ENCODE measurements at regions of chr1 and their contacts with region 1.

Region 1: DNA sequence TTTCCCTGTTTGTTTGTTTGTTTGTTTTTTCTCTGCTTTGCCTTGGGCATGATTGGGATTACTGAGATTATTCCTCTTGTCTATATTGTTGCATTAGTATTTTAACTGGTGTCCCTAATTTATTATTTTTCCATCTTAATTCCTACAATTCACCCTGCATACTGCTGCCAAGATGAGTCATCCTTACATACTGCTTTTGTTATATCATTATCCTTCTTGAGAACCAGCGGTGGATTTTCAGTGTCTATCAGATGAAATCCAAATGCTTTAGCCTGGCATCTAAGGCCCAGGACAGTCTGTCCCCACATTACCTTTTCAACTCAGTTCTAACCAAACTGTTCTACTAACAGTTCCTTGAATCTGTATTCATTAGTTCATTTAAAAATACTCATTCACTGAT is 101.7 kb downstream of the OLFML2B start:
- DNase-seq: no peak
- ATAC-seq: no peak
- H3K4me3 ChIP-seq: no peak overlapping the region
- H3K4me3 Mint-ChIP-seq: peak overlapping the region in 2 of 10 donors; percentile 8 to 15
- H3K27ac ChIP-seq: no peak overlapping the region
- H3K27ac Mint-ChIP-seq: peak overlapping the region in 3 of 9 donors; percentile 9 to 34 (median 17)
- H3K4me1 ChIP-seq: peaks cover 15% of the 10 kb centered on the region in 2 donors
- H3K4me1 Mint-ChIP-seq: peaks cover 10 to 83% (median 60%) of the 10 kb centered on the region in 7 donors
- H3K27me3 ChIP-seq: no peaks in the 10 kb centered on the region
- H3K27me3 Mint-ChIP-seq: no peaks in the 10 kb centered on the region

Region 2: GRCh38 chr1:161910604-161911003 is 11.4 kb before region 1 on chr1:
- CTCF ChIA-PET with region 1: interaction called, 3 read pairs
- POLR2A ChIA-PET with region 1: interaction called, 5 read pairs
- intact Hi-C with region 1: loop called in 1 of 2 experiments (anchors 1 kb)
- DNase-seq: no peak
- ATAC-seq: no peak
- H3K4me3 ChIP-seq: no peak overlapping the region
- H3K4me3 Mint-ChIP-seq: no peak overlapping the region
- H3K27ac ChIP-seq: no peak overlapping the region
- H3K27ac Mint-ChIP-seq: peak overlapping the region in 4 of 9 donors; percentile 7 to 75 (median 44)
- H3K4me1 ChIP-seq: no peaks in the 10 kb centered on the region
- H3K4me1 Mint-ChIP-seq: peaks cover 3 to 35% (median 26%) of the 10 kb centered on the region in 7 donors
- H3K27me3 ChIP-seq: no peaks in the 10 kb centered on the region
- H3K27me3 Mint-ChIP-seq: no peaks in the 10 kb centered on the region